ENCODE measurements at regions of chr15 and their contacts with region 1.

Region 1: GRCh38 chr15:72796515-72797337 is 13.2 kb upstream of the ADPGK start:
- DNase-seq: peak; percentile 19
- ATAC-seq: peak; percentile 78
- H3K4me3 ChIP-seq: peak overlapping the region; percentile 67
- H3K27ac ChIP-seq: no peak overlapping the region
- H3K4me1 ChIP-seq: 0 out of 2 replicates have a peak, but pooled peaks cover 3% of the 10 kb centered on the region
- H3K27me3 ChIP-seq: peaks cover 18% of the 10 kb centered on the region; the same call in 1 of the 2 replicates
- CTCF ChIP-seq: peak; percentile 52; the same call in 1 of the 2 replicates

Region 2: DNA sequence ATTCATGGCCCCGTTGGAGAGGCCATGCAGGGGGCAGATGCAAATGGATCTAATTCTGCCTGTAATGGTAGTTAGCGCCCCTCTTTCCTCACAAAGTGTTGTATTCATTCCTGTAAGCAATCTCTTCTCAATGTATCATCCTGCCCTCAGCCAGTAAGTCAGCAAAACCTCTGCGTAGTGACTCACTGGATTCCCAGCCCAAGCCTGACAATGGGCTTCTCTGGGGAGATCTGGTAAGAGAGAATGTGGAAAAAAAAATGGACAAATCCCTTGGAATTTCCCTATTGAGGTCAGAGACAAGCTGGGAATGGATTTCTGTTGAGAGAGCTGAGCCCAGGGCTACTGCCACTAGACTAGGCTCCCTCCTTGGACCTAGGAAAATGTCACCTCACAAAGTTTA is 38.5 kb before region 1 on chr15:
- CTCF ChIA-PET with region 1: no interaction called
- POLR2A ChIA-PET with region 1: no interaction called
- intact Hi-C with region 1: no loop called
- DNase-seq: peak; percentile 19
- ATAC-seq: no peak; the same call in 1 of the 2 replicates
- H3K4me3 ChIP-seq: no peak overlapping the region
- H3K27ac ChIP-seq: no peak overlapping the region
- H3K4me1 ChIP-seq: no peaks in the 10 kb centered on the region
- H3K27me3 ChIP-seq: no peaks in the 10 kb centered on the region
- CTCF ChIP-seq: no peak

Region 3: GRCh38 chr15:72968531-72968922 is 171.8 kb after region 1 on chr15:
- CTCF ChIA-PET with region 1: no interaction called
- POLR2A ChIA-PET with region 1: no interaction called
- intact Hi-C with region 1: no loop called
- DNase-seq: peak; percentile 11
- ATAC-seq: no peak
- H3K4me3 ChIP-seq: no peak overlapping the region
- H3K27ac ChIP-seq: no peak overlapping the region
- H3K4me1 ChIP-seq: no peaks in the 10 kb centered on the region
- H3K27me3 ChIP-seq: peaks cover 16% of the 10 kb centered on the region
- CTCF ChIP-seq: no peak

Region 4: GRCh38 chr15:73081321-73081958 is 284.7 kb after region 1 on chr15:
- CTCF ChIA-PET with region 1: no interaction called
- POLR2A ChIA-PET with region 1: no interaction called
- intact Hi-C with region 1: loop called (anchors 1 kb)
- DNase-seq: peak; percentile 61
- ATAC-seq: peak; percentile 43; the same call in 1 of the 2 replicates
- H3K4me3 ChIP-seq: no peak overlapping the region
- H3K27ac ChIP-seq: no peak overlapping the region
- H3K4me1 ChIP-seq: peaks cover 8% of the 10 kb centered on the region; the same call in 1 of the 2 replicates
- H3K27me3 ChIP-seq: no peaks in the 10 kb centered on the region
- CTCF ChIP-seq: peak; percentile 66

Measured in PC-3 (cell line).